Activated naive CD4-positive, alpha-beta T cell treated with anti-CD3 and anti-CD28 coated beads for 36 hours (primary cell): ENCODE measurements at regions of chr7 and their contacts with region 1.

Region 1: GRCh38 chr7:116588641-116589594 is 64.1 kb downstream of the CAV1 start:
- DNase-seq: no peak
- H3K4me3 Mint-ChIP-seq: no peak overlapping the region
- H3K27ac Mint-ChIP-seq: no peak overlapping the region
- H3K4me1 Mint-ChIP-seq: peaks cover 26% of the 10 kb centered on the region
- H3K27me3 Mint-ChIP-seq: peaks cover 22% of the 10 kb centered on the region

Region 2: DNA sequence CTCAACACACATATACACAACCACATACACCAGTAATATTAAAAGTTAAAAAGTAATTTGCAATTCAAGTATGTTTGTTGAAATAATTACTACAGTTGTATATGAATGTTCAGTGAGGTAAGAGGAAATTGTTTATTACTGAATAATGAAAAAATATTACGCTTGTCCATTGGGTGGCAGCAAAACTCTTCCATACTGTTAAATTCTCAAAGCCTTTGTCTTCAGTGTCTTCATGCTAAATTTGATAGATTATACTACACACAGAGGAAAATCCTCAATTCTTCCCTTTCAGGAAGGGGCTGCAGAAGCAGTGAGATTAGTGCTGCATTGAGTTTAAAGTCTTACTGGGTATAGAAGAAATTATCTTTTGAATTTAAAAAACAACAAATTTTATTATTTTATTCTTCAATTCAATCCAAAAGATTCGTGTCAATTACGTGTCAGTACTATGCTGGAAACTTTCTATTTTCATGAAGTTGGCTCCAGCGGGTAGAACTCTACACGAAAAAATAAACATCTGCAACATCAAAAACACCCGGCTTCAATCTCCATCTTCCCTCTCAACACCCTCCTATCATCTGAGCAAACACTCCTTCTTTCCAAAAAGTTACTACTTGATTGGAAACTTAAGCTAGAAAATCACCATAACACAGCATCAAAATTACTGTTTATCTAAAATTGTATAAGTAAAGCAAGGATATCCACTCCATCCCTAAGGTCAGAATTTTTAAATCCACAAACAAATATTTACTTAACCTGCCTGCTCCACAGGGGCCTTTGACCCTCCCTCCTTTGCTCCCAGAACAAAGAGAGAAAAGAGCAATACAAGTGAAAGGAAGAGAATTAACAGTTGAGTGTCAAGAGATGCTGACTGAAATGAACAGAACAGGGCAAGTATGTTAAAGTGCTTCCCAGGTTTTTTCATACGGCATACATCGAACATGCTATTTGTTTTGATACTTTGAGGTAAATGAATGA is 415.6 kb before region 1 on chr7:
- CTCF ChIA-PET with region 1: interaction called, 34 read pairs
- intact Hi-C with region 1: loop called (anchors 1 kb)
- DNase-seq: peak; percentile 37
- H3K4me3 Mint-ChIP-seq: no peak overlapping the region
- H3K27ac Mint-ChIP-seq: no peak overlapping the region
- H3K4me1 Mint-ChIP-seq: no peaks in the 10 kb centered on the region
- H3K27me3 Mint-ChIP-seq: peaks cover 7% of the 10 kb centered on the region

Region 3: DNA sequence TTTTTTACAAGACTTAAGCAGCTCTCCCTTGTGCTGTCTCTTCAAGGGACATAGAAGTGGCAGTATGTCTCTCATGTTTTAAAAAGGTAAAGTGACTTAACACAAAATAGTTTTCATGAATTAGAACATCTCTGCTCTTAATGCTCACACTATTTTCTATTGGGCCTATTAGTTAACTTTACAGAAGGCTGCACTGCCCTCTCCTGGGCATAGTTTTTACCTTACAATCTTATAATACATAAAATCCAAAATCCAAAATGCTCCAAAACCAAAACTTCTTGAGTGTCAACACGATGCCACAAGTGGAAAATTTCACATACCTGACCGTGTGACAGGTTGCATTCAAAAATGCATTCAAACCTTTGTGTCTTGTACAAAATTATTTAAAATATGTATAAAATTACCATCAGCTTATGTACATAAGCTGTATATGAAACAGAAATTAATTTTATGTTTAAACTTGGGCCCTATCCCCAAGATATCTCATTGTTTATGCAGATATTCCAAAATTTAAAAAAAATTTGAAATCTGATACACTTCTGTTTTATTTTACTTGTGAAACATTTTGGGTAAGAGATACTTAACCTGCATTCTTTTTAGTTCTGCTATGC is 352.8 kb before region 1 on chr7:
- CTCF ChIA-PET with region 1: interaction called, 11 read pairs
- intact Hi-C with region 1: loop called (anchors 2 kb)
- DNase-seq: peak; percentile 73
- H3K4me3 Mint-ChIP-seq: no peak overlapping the region
- H3K27ac Mint-ChIP-seq: no peak overlapping the region
- H3K4me1 Mint-ChIP-seq: peaks cover 69% of the 10 kb centered on the region
- H3K27me3 Mint-ChIP-seq: no peaks in the 10 kb centered on the region

Region 4: GRCh38 chr7:116258734-116259133 is 330.2 kb before region 1 on chr7:
- CTCF ChIA-PET with region 1: interaction called, 50 read pairs
- intact Hi-C with region 1: loop called (anchors 1 kb)
- DNase-seq: peak; percentile 52
- H3K4me3 Mint-ChIP-seq: no peak overlapping the region
- H3K27ac Mint-ChIP-seq: no peak overlapping the region
- H3K4me1 Mint-ChIP-seq: peaks cover 11% of the 10 kb centered on the region
- H3K27me3 Mint-ChIP-seq: no peaks in the 10 kb centered on the region

Region 5: GRCh38 chr7:116525913-116526861 is 62.7 kb before region 1 on chr7:
- CTCF ChIA-PET with region 1: interaction called, 25 read pairs
- intact Hi-C with region 1: loop called (anchors 1 kb)
- DNase-seq: peak; percentile 65
- H3K4me3 Mint-ChIP-seq: peak overlapping the region; percentile 85
- H3K27ac Mint-ChIP-seq: no peak overlapping the region
- H3K4me1 Mint-ChIP-seq: peaks cover 19% of the 10 kb centered on the region
- H3K27me3 Mint-ChIP-seq: peaks cover 62% of the 10 kb centered on the region

Region 6: GRCh38 chr7:116540743-116541142 is 48.2 kb before region 1 on chr7:
- CTCF ChIA-PET with region 1: no interaction called
- intact Hi-C with region 1: no loop called
- DNase-seq: no peak
- H3K4me3 Mint-ChIP-seq: no peak overlapping the region
- H3K27ac Mint-ChIP-seq: no peak overlapping the region
- H3K4me1 Mint-ChIP-seq: no peaks in the 10 kb centered on the region
- H3K27me3 Mint-ChIP-seq: peaks cover 29% of the 10 kb centered on the region

Region 7: GRCh38 chr7:116671681-116672595 is 83.0 kb after region 1 on chr7 and contains the start of gene MET:
- CTCF ChIA-PET with region 1: interaction called, 3 read pairs
- intact Hi-C with region 1: loop called (anchors 5 kb)
- DNase-seq: peak; percentile 72
- H3K4me3 Mint-ChIP-seq: peak within 1 kb of the TSS; percentile 73
- H3K27ac Mint-ChIP-seq: no peak within 1 kb of the TSS
- H3K4me1 Mint-ChIP-seq: peaks cover 2% of the 10 kb centered on the region
- H3K27me3 Mint-ChIP-seq: peaks cover 54% of the 10 kb centered on the region
- total RNA-seq, gene MET: 0.42 to 0.52 TPM

Region 8: GRCh38 chr7:116809636-116810266 is 220.8 kb after region 1 on chr7:
- CTCF ChIA-PET with region 1: interaction called, 20 read pairs
- intact Hi-C with region 1: loop called (anchors 1 kb)
- DNase-seq: peak; percentile 21
- H3K4me3 Mint-ChIP-seq: no peak overlapping the region
- H3K27ac Mint-ChIP-seq: no peak overlapping the region
- H3K4me1 Mint-ChIP-seq: no peaks in the 10 kb centered on the region
- H3K27me3 Mint-ChIP-seq: no peaks in the 10 kb centered on the region